Right ventricle myocardium superior (tissue), 1 donor: ENCODE measurements at regions of chr21 and their contacts with region 1.

Region 1: DNA sequence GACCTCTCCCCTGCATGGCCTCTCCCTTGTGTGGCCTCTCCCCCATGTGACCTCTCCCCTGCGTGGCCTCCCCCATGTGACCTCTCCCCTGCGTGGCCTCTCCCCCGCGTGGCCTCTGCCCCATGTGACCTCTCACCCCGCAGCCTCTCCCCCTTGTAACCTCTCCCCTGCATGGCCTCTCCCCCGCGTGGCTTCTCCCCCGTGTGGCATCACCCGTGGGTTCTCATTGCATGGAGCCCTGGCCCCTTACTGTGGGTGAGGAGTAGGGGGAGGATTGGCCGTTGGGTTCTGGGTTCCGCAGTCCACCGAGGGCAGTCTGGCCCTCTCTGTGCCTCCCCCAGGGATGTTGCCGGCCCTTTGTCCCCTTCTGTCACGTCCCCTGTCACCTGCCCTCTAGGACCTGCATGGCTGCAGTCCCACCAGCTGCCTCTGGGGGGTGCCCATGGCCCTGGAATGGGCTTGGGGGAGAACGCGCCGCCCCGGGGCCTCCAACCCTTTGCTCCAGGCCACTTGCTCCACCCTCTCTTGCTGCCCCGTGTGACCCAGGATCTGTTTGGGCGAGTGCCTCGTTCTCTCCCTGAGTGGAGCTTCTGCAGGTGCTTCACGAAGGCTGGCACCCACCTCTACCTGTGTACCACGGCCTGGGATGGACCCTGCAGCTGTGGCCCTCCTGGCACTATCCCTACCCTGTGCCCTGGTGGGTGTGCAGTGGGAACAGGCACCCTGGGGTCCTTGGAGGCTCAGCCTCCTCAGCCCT is 21.3 kb downstream of the RRP1 start:
- DNase-seq: peak; percentile 92
- ATAC-seq: peak; percentile 92

Region 2: DNA sequence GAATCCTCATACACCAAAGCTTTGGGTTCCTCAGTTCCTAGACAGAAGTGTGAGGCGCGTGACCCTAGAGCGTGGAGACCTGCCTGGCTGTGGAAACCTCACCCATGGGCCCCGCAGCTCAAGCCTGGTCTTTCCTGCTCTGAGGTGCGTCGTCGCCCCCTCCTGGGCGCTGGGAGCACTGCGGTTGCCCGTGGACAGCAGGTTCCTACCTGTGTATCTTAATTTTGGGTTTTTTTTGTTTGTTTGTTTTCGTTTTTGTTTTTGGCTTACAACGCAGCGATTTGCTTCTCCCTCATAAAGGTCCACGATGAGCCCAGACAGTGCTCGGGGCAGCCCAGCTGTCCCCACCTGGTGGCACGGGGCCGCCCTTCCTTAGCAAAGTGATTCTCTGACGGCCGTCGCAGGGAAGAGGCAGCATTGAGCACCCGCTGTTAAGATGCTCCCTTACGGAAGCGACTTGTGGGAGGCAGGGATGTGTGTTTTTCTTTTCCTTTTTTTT is 164.9 kb after region 1 on chr21:
- intact Hi-C with region 1: loop called (anchors 5 kb)
- DNase-seq: peak; percentile 88
- ATAC-seq: peak; percentile 88